Naive thymus-derived CD4-positive, alpha-beta T cell (primary cell): ENCODE measurements at regions of chr16 and their contacts with region 1.

Region 1: GRCh38 chr16:21646721-21647561 is 5.5 kb downstream of the IGSF6 start:
- DNase-seq: peak in 8 of 9 donors; percentile 66 to 79 (median 71)
- ATAC-seq: peak; percentile 83
- H3K4me3 ChIP-seq: peak overlapping the region; percentile 57
- H3K4me3 Mint-ChIP-seq: peak overlapping the region; percentile 69 to 90 (median 81)
- H3K27ac ChIP-seq: peak overlapping the region; percentile 77
- H3K27ac Mint-ChIP-seq: peak overlapping the region; percentile 91 to 97 (median 95)
- H3K4me1 ChIP-seq: peaks cover 43 to 50% of the 10 kb centered on the region in 2 donors
- H3K4me1 Mint-ChIP-seq: peaks cover 26 to 69% (median 56%) of the 10 kb centered on the region in 7 donors
- H3K27me3 ChIP-seq: no peaks in the 10 kb centered on the region
- H3K27me3 Mint-ChIP-seq: no peaks in the 10 kb centered on the region

Region 2: GRCh38 chr16:20741554-20742285 is 905.2 kb before region 1 on chr16 and contains the start of gene THUMPD1:
- CTCF ChIA-PET with region 1: no interaction called
- POLR2A ChIA-PET with region 1: no interaction called
- intact Hi-C with region 1: loop called in 1 of 2 experiments (anchors 2 kb)
- DNase-seq: peak; percentile 88 to 97 (median 95)
- ATAC-seq: peak; percentile 97
- H3K4me3 ChIP-seq: peak within 1 kb of the TSS; percentile 100
- H3K4me3 Mint-ChIP-seq: peak within 1 kb of the TSS; percentile 93 to 98 (median 96)
- H3K27ac ChIP-seq: peak within 1 kb of the TSS; percentile 93
- H3K27ac Mint-ChIP-seq: peak within 1 kb of the TSS; percentile 90 to 99 (median 98)
- H3K4me1 ChIP-seq: peaks cover 12 to 25% of the 10 kb centered on the region in 2 donors
- H3K4me1 Mint-ChIP-seq: peaks cover 10 to 35% (median 26%) of the 10 kb centered on the region in 7 donors
- H3K27me3 ChIP-seq: no peaks in the 10 kb centered on the region
- H3K27me3 Mint-ChIP-seq: peaks cover 0 to 2% (median 0%) of the 10 kb centered on the region in 5 donors
- total RNA-seq, gene THUMPD1: 41.9 to 107 (median 72.5) TPM

Region 3: DNA sequence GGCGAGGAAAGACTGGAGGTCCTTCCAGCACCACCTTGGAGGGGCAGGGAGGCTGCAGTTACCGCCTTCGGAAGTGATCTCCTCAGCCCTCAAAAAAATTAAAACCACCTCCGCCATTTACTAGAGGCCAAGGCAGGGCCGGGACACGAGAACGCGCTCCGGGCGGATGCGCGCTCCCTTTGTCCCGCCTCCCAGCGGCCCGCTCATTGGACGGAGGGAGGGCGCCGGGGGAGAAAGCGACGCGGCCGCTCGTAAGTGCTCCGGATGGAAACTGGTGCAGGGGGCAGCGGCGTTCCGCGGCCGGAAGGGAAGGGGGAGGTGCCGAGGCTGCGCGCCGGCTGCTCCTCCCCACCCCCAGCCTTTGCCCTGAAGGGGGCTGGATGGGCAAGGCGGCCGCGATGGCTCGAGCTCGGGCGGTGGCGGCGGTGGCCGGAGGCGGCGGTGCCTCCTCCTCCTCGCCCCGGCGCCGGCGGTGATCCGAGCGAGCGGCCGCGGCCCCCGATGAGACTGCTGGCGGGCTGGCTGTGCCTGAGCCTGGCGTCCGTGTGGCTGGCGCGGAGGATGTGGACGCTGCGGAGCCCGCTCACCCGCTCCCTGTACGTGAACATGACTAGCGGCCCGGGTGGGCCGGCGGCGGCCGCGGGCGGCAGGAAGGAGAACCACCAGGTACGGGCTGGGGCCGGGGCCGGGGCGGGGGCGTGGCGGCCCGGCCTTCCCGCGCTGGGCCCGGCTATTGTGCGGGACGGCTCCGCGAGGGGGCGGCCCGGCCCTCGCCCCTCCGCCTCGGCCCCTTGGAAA is 47.5 kb before region 1 on chr16 and contains the start of gene METTL9:
- CTCF ChIA-PET with region 1: interaction called, 4 read pairs
- POLR2A ChIA-PET with region 1: interaction called, 35 read pairs
- intact Hi-C with region 1: loop called (anchors 1 kb)
- DNase-seq: peak; percentile 92 to 96 (median 94)
- ATAC-seq: peak; percentile 96
- H3K4me3 ChIP-seq: peak within 1 kb of the TSS; percentile 82
- H3K4me3 Mint-ChIP-seq: peak within 1 kb of the TSS; percentile 91 to 98 (median 94)
- H3K27ac ChIP-seq: peak within 1 kb of the TSS; percentile 91
- H3K27ac Mint-ChIP-seq: peak within 1 kb of the TSS; percentile 86 to 99 (median 96)
- H3K4me1 ChIP-seq: peaks cover 21 to 32% of the 10 kb centered on the region in 2 donors
- H3K4me1 Mint-ChIP-seq: peaks cover 45 to 70% (median 54%) of the 10 kb centered on the region in 7 donors
- H3K27me3 ChIP-seq: no peaks in the 10 kb centered on the region
- H3K27me3 Mint-ChIP-seq: no peaks in the 10 kb centered on the region
- total RNA-seq, gene METTL9: 68.4 to 128 (median 80.1) TPM

Region 4: DNA sequence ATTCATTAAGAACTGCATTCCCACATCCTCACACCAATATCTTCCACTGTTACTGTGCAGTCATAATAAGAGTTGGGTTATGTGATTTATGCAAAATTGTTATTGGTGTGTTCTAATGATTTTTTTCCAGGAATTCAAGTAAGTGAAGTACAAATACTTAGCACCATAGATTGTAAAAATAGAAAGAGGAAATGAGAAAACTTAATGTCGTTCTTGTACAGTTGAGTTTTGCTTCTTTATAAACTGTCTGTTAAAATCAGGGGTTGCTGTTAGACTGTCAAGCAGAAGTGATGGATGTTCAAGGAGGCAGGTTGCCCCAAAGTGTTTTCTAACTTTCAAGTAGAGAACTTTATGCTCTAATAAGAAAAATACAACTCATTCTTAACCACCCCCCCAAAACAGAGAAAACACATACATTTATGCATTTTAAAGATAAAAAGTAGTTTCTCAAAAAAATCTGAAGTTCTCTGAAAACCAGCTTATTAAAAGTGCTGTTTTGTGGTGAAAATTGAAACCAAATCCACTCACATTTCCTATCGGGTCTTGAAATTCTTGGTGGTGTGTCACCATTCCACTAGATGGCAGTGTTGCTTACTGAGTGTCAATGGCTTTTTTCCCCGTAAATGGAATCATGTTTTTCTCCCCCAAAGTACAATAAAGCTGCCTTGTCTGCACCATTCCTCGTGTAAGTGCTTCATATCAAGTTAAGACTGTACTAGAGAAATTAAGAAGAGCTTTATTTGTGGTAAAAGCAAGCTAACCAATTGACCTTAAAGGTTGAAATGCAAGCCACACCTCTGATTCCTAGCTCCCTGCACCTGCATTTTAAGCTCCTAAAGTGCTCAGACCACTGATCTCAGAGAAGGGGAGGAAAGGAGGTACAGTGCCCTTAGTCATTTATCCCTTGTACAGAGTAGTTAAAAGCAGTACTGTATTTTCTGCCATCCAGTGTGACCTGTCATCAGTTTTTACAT is 10.1 kb after region 1 on chr16:
- CTCF ChIA-PET with region 1: interaction called, 51 read pairs
- POLR2A ChIA-PET with region 1: interaction called, 10 read pairs
- intact Hi-C with region 1: loop called in 1 of 2 experiments (anchors 1 kb)
- DNase-seq: peak in 7 of 9 donors; percentile 50 to 71 (median 66)
- ATAC-seq: peak; percentile 72
- H3K4me3 ChIP-seq: no peak overlapping the region
- H3K4me3 Mint-ChIP-seq: peak overlapping the region in 5 of 10 donors; percentile 7 to 48 (median 33)
- H3K27ac ChIP-seq: no peak overlapping the region
- H3K27ac Mint-ChIP-seq: peak overlapping the region in 8 of 9 donors; percentile 5 to 87 (median 26)
- H3K4me1 ChIP-seq: peaks cover 16 to 24% of the 10 kb centered on the region in 2 donors
- H3K4me1 Mint-ChIP-seq: peaks cover 20 to 45% (median 37%) of the 10 kb centered on the region in 7 donors
- H3K27me3 ChIP-seq: no peaks in the 10 kb centered on the region
- H3K27me3 Mint-ChIP-seq: no peaks in the 10 kb centered on the region

Region 5: DNA sequence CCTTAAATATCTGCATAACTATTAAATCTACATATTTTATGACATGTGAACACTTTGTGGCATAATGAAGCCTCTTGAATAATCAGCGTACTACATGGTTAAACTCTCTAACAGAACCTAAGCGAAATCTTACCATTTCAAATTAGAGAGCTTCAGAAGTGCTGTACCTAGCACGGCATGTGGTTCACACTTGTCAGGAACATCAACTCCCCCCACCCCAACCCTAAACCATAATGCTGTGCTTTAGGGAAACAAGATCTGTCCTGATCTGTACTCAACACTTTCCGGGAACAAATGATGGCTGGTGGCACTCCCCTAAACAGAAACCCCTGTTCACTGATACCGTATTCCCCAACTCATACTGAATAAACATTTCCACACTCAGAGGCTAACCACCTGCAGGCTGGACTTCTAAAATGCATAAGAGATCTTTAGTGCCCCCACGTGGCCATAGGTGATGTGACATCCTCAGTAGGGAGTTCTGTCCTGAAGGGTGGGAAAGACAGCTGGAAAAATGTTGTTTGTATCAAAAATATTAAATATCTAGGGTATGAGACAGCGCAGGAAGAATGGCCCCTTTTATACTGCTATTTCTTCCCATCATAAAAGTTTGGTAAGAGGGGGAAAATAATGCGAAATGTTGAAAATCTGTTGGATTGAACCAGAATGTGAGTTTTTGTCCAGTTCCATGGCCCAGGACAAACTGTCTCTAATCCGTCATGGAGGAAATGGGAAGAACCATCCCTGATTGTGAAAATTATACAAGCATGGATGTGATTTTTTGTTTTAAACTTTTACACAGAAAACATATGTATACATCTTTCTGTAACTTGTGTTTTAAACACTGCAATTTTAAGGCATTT is 1413.7 kb after region 1 on chr16:
- CTCF ChIA-PET with region 1: interaction called, 3 read pairs
- POLR2A ChIA-PET with region 1: no interaction called
- intact Hi-C with region 1: loop called in 1 of 2 experiments (anchors 5 kb)
- DNase-seq: peak in 8 of 9 donors; percentile 9 to 48 (median 38)
- ATAC-seq: peak; percentile 74
- H3K4me3 ChIP-seq: no peak overlapping the region
- H3K4me3 Mint-ChIP-seq: no peak overlapping the region
- H3K27ac ChIP-seq: no peak overlapping the region
- H3K27ac Mint-ChIP-seq: no peak overlapping the region
- H3K4me1 ChIP-seq: no peaks in the 10 kb centered on the region
- H3K4me1 Mint-ChIP-seq: peaks cover 0 to 3% (median 0%) of the 10 kb centered on the region in 7 donors
- H3K27me3 ChIP-seq: no peaks in the 10 kb centered on the region
- H3K27me3 Mint-ChIP-seq: peaks cover 12 to 31% (median 16%) of the 10 kb centered on the region in 5 donors